Left cardiac atrium (tissue), 4 donors: ENCODE measurements at regions of chr2 and their contacts with region 1.

Region 1: GRCh38 chr2:11129598-11130449 is 25.4 kb upstream of the SLC66A3 start:
- DNase-seq: peak; percentile 61
- ATAC-seq: peak; percentile 62 to 64

Region 2: GRCh38 chr2:11583840-11584524 is 454.2 kb after region 1 on chr2:
- intact Hi-C with region 1: loop called in 1 of 2 experiments (anchors 5 kb)
- DNase-seq: peak; percentile 70
- ATAC-seq: peak; percentile 71 to 89

Region 3: GRCh38 chr2:11753886-11754699 is 624.3 kb after region 1 on chr2:
- intact Hi-C with region 1: no loop called
- DNase-seq: peak; percentile 44
- ATAC-seq: peak; percentile 20 to 86